Aorta (tissue), 5 donors: ENCODE measurements at regions of chr4 and their contacts with region 1.

Region 1: GRCh38 chr4:139988863-139989733 is 164.9 kb downstream of the MAML3 start:
- DNase-seq: peak; percentile 75 to 78
- ATAC-seq: peak; percentile 82
- H3K4me3 ChIP-seq: no peak overlapping the region
- H3K27ac ChIP-seq: no peak overlapping the region
- H3K4me1 ChIP-seq: peaks cover 2 to 6% of the 10 kb centered on the region in 2 donors
- H3K27me3 ChIP-seq: no peaks in the 10 kb centered on the region

Region 2: DNA sequence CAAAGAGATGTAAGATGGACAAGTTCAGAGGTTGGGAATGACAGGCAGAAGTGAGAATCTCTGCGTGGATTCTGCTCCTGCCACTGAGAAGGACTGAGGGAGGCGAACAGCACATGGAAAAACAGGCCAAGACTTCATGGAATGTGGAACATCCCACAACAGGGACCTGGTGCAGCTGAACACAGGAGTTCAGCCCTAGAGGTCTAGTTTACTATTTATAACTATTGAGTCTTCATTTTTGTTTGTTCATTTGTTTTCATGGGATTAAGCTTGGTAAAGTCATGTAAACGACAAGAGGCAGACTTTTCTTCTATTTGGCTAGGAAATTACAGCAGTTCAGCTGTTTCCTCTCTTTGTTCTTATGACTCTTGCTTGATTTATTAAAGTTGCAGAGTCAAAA is 69.6 kb before region 1 on chr4:
- intact Hi-C with region 1: loop called in 1 of 2 experiments (anchors 10 kb)
- DNase-seq: no peak
- ATAC-seq: peak; percentile 61
- H3K4me3 ChIP-seq: no peak overlapping the region
- H3K27ac ChIP-seq: peak overlapping the region in 1 of 2 donors; percentile 58
- H3K4me1 ChIP-seq: peaks cover 3 to 7% of the 10 kb centered on the region in 2 donors
- H3K27me3 ChIP-seq: no peaks in the 10 kb centered on the region